Esophagus muscularis mucosa (tissue), 4 donors: ENCODE measurements at regions of chr7 and their contacts with region 1.

Region 1: DNA sequence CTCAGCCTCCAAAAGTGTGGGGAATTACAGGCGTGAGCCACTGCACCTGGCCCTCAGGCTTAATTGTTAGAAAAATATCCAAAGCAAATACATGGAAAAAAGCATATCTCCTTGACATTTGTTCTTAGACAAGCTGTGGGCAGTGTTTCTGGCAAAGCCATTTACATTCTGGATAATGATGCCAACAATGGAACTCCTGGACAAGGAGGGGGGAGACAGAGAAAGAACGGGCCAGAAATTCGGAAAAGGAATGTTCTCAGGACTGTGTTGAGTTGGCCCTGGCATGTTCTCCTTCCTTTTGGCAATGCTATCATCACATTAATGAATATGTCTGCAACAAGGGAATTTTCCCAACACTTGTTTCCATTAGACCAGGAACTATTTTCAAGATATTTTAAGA is 88.7 kb downstream of the UBE2H start:
- DNase-seq: no peak
- H3K4me3 ChIP-seq: no peak overlapping the region
- H3K27ac ChIP-seq: peak overlapping the region; percentile 76 to 84 (median 80)
- H3K4me1 ChIP-seq: peaks cover 85 to 89% (median 89%) of the 10 kb centered on the region in 4 donors
- H3K27me3 ChIP-seq: no peaks in the 10 kb centered on the region
- CTCF ChIP-seq: no peak
- EP300 ChIP-seq: no peak
- POLR2A ChIP-seq: no peak

Region 2: GRCh38 chr7:129343099-129343700 is 520.8 kb before region 1 on chr7:
- intact Hi-C with region 1: no loop called
- DNase-seq: no peak
- H3K4me3 ChIP-seq: no peak overlapping the region
- H3K27ac ChIP-seq: no peak overlapping the region
- H3K4me1 ChIP-seq: peaks cover 0 to 6% (median 2%) of the 10 kb centered on the region in 4 donors
- H3K27me3 ChIP-seq: no peaks in the 10 kb centered on the region
- CTCF ChIP-seq: peak; percentile 71 to 75 (median 72)
- EP300 ChIP-seq: no peak
- POLR2A ChIP-seq: no peak

Region 3: GRCh38 chr7:129948877-129949291 is 84.8 kb after region 1 on chr7:
- intact Hi-C with region 1: loop called (anchors 5 kb)
- DNase-seq: peak; percentile 97
- H3K4me3 ChIP-seq: peak overlapping the region; percentile 90 to 100 (median 97)
- H3K27ac ChIP-seq: peak overlapping the region; percentile 97 to 99 (median 98)
- H3K4me1 ChIP-seq: peaks cover 35 to 62% (median 47%) of the 10 kb centered on the region in 4 donors
- H3K27me3 ChIP-seq: no peaks in the 10 kb centered on the region
- CTCF ChIP-seq: no peak
- EP300 ChIP-seq: no peak
- POLR2A ChIP-seq: no peak